ENCODE measurements at regions of chr16 and their contacts with region 1.

Region 1: DNA sequence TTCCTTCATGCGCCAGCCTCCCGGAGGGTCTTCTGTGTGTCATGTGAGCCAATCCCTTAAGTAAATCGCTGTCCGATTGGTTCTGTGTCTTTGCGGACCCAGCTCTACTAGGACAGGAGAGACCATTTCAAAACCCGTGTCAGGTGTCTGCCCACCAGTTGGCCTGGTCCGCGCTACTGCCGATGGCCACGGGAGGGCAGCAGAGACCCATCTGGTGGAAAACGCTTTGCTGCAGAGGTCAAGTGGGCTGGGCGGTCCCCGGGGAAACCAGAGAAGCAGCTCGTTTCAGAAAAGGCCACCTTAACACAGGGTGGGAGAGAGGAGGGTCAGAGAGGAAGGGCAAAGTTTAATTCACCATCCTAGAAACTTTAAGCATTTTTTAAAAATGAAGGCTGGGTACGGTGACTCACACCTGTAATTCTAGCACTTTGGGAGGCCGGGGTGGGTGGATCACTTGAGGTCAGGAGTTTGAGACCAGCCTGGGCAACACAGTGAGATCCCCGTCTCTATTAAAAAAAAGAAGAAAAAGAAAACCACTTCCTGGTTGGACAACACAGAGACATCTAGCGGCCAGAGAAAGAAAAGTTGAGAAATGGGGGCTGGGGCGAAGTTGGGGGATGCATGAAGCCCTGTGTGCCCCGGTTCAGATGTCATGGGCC is 2.8 kb upstream of the CIBAR2 start:
- DNase-seq: peak; percentile 83 to 100
- H3K4me3 ChIP-seq: no peak overlapping the region
- H3K27ac ChIP-seq: no peak overlapping the region
- H3K4me1 ChIP-seq: peaks cover 0 to 3% (median 1%) of the 10 kb centered on the region in 4 experiments; a peak in 2 of 7 replicates
- H3K27me3 ChIP-seq: 0 out of 7 replicates have a peak, but pooled peaks cover 0 to 2% (median 0%) of the 10 kb centered on the region in 4 experiments
- CTCF ChIP-seq: peak; percentile 96 to 99 (median 97)
- EP300 ChIP-seq: 0 out of 3 replicates have a peak, but pooled peaks of 1 of the 2 experiments have one; percentile 8
- POLR2A ChIP-seq: no peak
- RAD21 ChIP-seq: peak; percentile 98 to 99

Region 2: DNA sequence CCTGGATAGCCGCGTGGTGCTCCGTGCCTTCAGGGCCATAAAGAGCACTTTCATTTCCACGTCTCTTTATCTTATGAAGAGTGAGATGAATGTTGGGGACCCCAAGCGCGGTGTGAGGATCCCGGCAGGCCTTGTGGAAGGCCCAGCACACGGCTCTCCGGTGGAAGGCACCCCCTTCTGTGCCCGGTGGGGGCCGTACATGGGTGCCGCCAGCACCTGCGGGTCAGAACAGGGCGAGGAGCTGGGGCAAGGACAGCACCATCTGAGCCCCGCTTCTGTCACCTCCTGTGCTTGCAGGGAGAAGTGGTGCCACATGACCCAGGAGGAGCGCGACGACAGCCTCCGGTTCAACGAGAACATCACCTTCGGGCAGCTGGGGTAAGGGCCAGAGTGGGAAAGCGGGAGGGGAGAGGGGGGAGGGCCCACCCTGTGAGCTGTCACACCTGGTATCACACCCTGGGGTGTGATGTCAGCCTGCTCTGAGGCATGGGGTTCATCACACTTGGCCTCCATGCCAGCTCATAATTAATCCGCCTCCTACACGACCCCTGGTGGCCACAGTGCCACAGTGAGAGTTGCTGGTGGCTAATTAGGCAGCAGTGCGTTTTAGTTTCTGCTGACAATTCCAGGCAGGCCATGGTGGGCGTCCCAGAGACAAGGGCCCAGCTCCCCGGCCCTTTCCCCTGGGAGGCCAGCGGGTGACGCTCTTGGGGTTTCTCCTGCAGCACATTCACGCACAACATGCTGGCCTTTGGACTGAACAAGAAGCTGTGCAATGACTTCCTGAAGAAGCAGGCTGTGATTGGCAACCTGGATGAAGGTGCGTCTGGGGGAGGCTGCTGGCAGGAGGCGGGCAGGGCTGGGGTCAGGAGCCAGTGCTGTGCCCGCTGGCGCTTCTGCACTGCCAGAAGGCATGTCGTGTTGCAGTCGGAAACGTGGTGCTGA is 28.4 kb before region 1 on chr16:
- CTCF ChIA-PET with region 1: interaction called, 16 read pairs
- POLR2A ChIA-PET with region 1: no interaction called
- DNase-seq: peak; percentile 44 to 89
- H3K4me3 ChIP-seq: no peak overlapping the region
- H3K27ac ChIP-seq: no peak overlapping the region
- H3K4me1 ChIP-seq: peaks cover 11 to 21% (median 19%) of the 10 kb centered on the region in 4 experiments
- H3K27me3 ChIP-seq: peaks cover 8 to 39% (median 32%) of the 10 kb centered on the region in 4 experiments
- CTCF ChIP-seq: peak; percentile 89 to 94 (median 93)
- EP300 ChIP-seq: no peak
- POLR2A ChIP-seq: no peak
- RAD21 ChIP-seq: peak; percentile 68 to 83

Region 3: GRCh38 chr16:85126705-85127419 is 11.8 kb after region 1 on chr16:
- CTCF ChIA-PET with region 1: interaction called, 31 read pairs
- POLR2A ChIA-PET with region 1: no interaction called
- DNase-seq: peak in 1 of 2 experiments; percentile 66
- H3K4me3 ChIP-seq: peak overlapping the region in 1 of 4 experiments; percentile 22; a peak in 2 of 8 replicates
- H3K27ac ChIP-seq: no peak overlapping the region
- H3K4me1 ChIP-seq: peaks cover 4 to 29% (median 12%) of the 10 kb centered on the region in 4 experiments
- H3K27me3 ChIP-seq: no peaks in the 10 kb centered on the region; a peak in 1 of 7 replicates
- CTCF ChIP-seq: no peak
- EP300 ChIP-seq: no peak
- POLR2A ChIP-seq: no peak
- RAD21 ChIP-seq: no peak; a peak in 1 of 4 replicates

Region 4: GRCh38 chr16:85172455-85173145 is 57.6 kb after region 1 on chr16:
- CTCF ChIA-PET with region 1: interaction called, 20 read pairs
- POLR2A ChIA-PET with region 1: interaction called, 6 read pairs
- DNase-seq: peak in 1 of 2 experiments; percentile 70
- H3K4me3 ChIP-seq: peak overlapping the region in 2 of 4 experiments; percentile 14; a peak in 1 of 8 replicates
- H3K27ac ChIP-seq: no peak overlapping the region
- H3K4me1 ChIP-seq: peaks cover 6 to 41% (median 18%) of the 10 kb centered on the region in 4 experiments
- H3K27me3 ChIP-seq: peaks cover 1 to 22% (median 15%) of the 10 kb centered on the region in 4 experiments; a peak in 6 of 7 replicates
- CTCF ChIP-seq: peak; percentile 66 to 89 (median 69)
- EP300 ChIP-seq: no peak
- POLR2A ChIP-seq: no peak
- RAD21 ChIP-seq: peak; percentile 23 to 45; a peak in 2 of 4 replicates

Region 5: GRCh38 chr16:85238233-85238647 is 123.2 kb after region 1 on chr16:
- CTCF ChIA-PET with region 1: interaction called, 19 read pairs
- POLR2A ChIA-PET with region 1: no interaction called
- DNase-seq: peak in 1 of 2 experiments; percentile 79
- H3K4me3 ChIP-seq: no peak overlapping the region
- H3K27ac ChIP-seq: no peak overlapping the region
- H3K4me1 ChIP-seq: peaks cover 4 to 41% (median 27%) of the 10 kb centered on the region in 4 experiments
- H3K27me3 ChIP-seq: no peaks in the 10 kb centered on the region; a peak in 2 of 7 replicates
- CTCF ChIP-seq: peak; percentile 50 to 59 (median 58)
- EP300 ChIP-seq: no peak
- POLR2A ChIP-seq: no peak
- RAD21 ChIP-seq: peak; percentile 39 to 48; a peak in 3 of 4 replicates

Region 6: GRCh38 chr16:85270374-85270773 is 155.3 kb after region 1 on chr16:
- CTCF ChIA-PET with region 1: interaction called, 11 read pairs
- POLR2A ChIA-PET with region 1: no interaction called
- DNase-seq: no peak
- H3K4me3 ChIP-seq: no peak overlapping the region
- H3K27ac ChIP-seq: no peak overlapping the region
- H3K4me1 ChIP-seq: no peaks in the 10 kb centered on the region; a peak in 4 of 7 replicates
- H3K27me3 ChIP-seq: peaks cover 0 to 3% (median 0%) of the 10 kb centered on the region in 4 experiments; a peak in 2 of 7 replicates
- CTCF ChIP-seq: no peak
- EP300 ChIP-seq: no peak
- POLR2A ChIP-seq: no peak
- RAD21 ChIP-seq: no peak

Measured in H1 (cell line).